H1 (cell line): ENCODE measurements at regions of chr1 and their contacts with region 1.

Region 1: DNA sequence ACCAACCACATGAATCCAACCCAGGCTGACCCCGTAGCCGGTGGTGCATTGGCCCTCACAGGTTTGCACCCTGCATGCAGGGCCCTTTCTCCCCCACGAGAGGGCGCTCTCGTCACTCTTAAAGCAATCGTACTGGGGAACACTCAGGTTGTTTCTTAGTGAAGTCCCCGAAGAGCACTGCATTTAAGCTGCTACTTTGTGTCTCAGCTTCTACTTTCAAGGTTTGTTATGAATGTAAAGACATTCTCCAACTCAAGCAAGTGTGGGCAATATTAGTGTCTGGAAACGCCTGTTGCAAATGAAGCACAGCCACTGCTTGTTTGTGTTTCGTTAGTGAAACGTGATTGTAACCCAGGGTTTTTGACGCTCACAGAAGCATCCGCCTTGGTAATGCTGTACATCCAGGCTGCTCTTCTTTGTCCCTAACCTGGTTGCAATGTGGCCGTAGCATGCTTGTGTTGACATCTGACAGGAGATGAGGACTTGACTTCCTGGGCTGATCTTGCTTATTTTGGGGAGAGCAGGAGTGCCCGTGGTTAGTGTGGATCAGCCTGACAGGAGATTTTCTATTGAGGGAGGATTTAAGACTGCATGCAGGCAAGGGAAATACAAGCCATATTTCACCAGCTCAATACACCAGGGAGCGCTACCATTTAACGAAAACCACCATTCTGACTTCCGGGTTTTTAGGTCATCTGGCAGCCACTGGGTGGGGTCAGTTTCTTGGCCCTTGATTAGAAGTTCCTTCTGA is 79.8 kb downstream of the ST6GALNAC3 start:
- DNase-seq: peak; percentile 41 to 91
- H3K4me3 ChIP-seq: no peak overlapping the region
- H3K27ac ChIP-seq: no peak overlapping the region
- H3K4me1 ChIP-seq: peaks cover 3 to 4% (median 3%) of the 10 kb centered on the region in 4 experiments; a peak in 6 of 7 replicates
- H3K27me3 ChIP-seq: no peaks in the 10 kb centered on the region
- CTCF ChIP-seq: peak; percentile 90 to 98 (median 97)
- EP300 ChIP-seq: no peak
- POLR2A ChIP-seq: no peak
- RAD21 ChIP-seq: peak; percentile 96 to 98

Region 2: DNA sequence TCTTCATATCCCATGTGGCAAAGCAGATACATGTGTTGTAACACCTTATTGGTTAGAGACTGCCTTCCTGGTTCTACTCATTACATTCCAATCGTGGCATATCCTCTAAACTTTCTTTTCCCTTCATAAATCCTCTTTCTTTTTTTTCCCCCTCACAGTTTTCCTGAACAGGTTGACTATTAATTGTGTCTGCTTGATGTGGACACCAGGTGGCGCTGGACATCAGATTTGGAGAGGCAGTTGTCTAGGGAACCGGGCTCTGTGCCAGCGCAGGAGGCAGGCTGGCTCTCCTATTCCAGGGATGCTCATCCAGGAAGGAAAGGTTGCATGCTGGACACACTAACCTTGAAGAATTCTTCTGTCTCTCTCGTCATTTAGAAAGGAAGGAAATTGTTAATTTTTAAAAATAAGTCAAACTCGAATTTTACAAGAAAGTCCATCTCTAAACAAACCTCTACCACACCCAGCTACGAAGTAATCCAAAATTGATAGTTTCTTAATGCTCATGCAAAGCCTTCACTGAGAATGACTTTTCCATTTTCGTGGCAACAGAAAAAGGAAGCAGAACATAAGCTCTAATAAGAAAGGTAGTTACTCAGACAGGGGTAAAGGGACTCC is 162.8 kb before region 1 on chr1:
- CTCF ChIA-PET with region 1: interaction called, 13 read pairs
- POLR2A ChIA-PET with region 1: no interaction called
- DNase-seq: peak; percentile 13 to 87
- H3K4me3 ChIP-seq: no peak overlapping the region
- H3K27ac ChIP-seq: no peak overlapping the region
- H3K4me1 ChIP-seq: no peaks in the 10 kb centered on the region; a peak in 1 of 7 replicates
- H3K27me3 ChIP-seq: no peaks in the 10 kb centered on the region
- CTCF ChIP-seq: peak; percentile 42 to 87 (median 77)
- EP300 ChIP-seq: no peak
- POLR2A ChIP-seq: no peak
- RAD21 ChIP-seq: peak; percentile 90 to 91

Region 3: GRCh38 chr1:76031496-76031895 is 122.9 kb before region 1 on chr1:
- CTCF ChIA-PET with region 1: no interaction called
- POLR2A ChIA-PET with region 1: no interaction called
- DNase-seq: no peak
- H3K4me3 ChIP-seq: no peak overlapping the region
- H3K27ac ChIP-seq: no peak overlapping the region
- H3K4me1 ChIP-seq: no peaks in the 10 kb centered on the region; a peak in 1 of 7 replicates
- H3K27me3 ChIP-seq: no peaks in the 10 kb centered on the region
- CTCF ChIP-seq: no peak
- EP300 ChIP-seq: no peak
- POLR2A ChIP-seq: no peak
- RAD21 ChIP-seq: no peak

Region 4: GRCh38 chr1:76142771-76143540 is 11.4 kb before region 1 on chr1:
- CTCF ChIA-PET with region 1: interaction called, 16 read pairs
- POLR2A ChIA-PET with region 1: no interaction called
- DNase-seq: no peak
- H3K4me3 ChIP-seq: no peak overlapping the region
- H3K27ac ChIP-seq: no peak overlapping the region
- H3K4me1 ChIP-seq: peaks cover 0 to 13% (median 6%) of the 10 kb centered on the region in 4 experiments; a peak in 5 of 7 replicates
- H3K27me3 ChIP-seq: no peaks in the 10 kb centered on the region
- CTCF ChIP-seq: no peak
- EP300 ChIP-seq: no peak
- POLR2A ChIP-seq: no peak
- RAD21 ChIP-seq: no peak

Region 5: GRCh38 chr1:76317299-76317900 is 163.0 kb after region 1 on chr1:
- CTCF ChIA-PET with region 1: interaction called, 11 read pairs
- POLR2A ChIA-PET with region 1: no interaction called
- DNase-seq: no peak
- H3K4me3 ChIP-seq: no peak overlapping the region
- H3K27ac ChIP-seq: no peak overlapping the region
- H3K4me1 ChIP-seq: peaks cover 0 to 8% (median 0%) of the 10 kb centered on the region in 4 experiments; a peak in 2 of 7 replicates
- H3K27me3 ChIP-seq: no peaks in the 10 kb centered on the region
- CTCF ChIP-seq: no peak
- EP300 ChIP-seq: no peak
- POLR2A ChIP-seq: no peak
- RAD21 ChIP-seq: no peak

Region 6: DNA sequence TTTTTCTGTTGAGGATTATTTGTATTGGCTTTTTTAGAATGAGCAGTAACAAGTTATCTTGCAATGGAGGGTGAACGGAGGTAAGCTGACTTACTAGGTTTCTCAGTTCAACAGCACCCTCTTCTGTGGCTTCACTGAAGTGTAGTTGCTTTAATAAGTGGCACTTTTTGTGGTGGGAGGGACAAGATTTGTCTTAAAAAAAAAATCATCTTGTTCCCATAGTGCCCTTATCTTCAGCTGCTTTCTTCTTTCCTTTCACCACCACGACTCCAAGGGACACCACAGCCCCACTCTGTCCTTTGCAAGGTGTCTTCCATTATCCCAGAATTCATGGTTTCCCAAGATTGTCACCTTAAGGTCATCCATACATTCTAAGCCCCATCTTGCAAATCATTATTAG is 971.9 kb after region 1 on chr1:
- CTCF ChIA-PET with region 1: interaction called, 17 read pairs
- POLR2A ChIA-PET with region 1: interaction called, 3 read pairs
- DNase-seq: no peak
- H3K4me3 ChIP-seq: no peak overlapping the region
- H3K27ac ChIP-seq: no peak overlapping the region
- H3K4me1 ChIP-seq: no peaks in the 10 kb centered on the region
- H3K27me3 ChIP-seq: no peaks in the 10 kb centered on the region
- CTCF ChIP-seq: peak in 2 of 3 experiments; percentile 65 to 72; a peak in 3 of 4 replicates
- EP300 ChIP-seq: no peak
- POLR2A ChIP-seq: no peak
- RAD21 ChIP-seq: peak; percentile 94 to 96